ENCODE measurements at regions of chr2 and their contacts with region 1.

Region 1: DNA sequence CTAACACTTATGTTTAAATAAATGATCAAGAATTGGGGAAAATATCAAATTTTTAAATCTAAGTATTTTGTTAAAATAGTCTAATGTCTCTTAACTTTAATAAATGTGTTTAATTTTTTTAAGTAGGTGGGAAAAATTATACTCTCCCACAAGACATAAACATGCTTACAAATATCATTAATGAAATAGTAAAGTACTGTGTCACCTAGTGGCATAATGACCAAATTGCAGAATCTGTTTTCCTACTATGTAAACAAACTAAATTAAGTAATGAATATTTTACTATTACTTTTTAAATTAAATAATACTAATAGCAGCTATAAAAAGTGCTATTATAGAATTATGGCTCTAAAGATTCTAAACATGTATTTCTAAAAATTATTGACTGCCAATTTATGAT is 52.0 kb upstream of the CHAC2 start:
- DNase-seq: no peak
- ATAC-seq: no peak
- H3K4me3 ChIP-seq: no peak overlapping the region
- H3K27ac ChIP-seq: no peak overlapping the region
- H3K4me1 ChIP-seq: no peaks in the 10 kb centered on the region
- H3K27me3 ChIP-seq: no peaks in the 10 kb centered on the region
- CTCF ChIP-seq: peak; percentile 36
- POLR2A ChIP-seq: no peak
- RAD21 ChIP-seq: peak; percentile 39; the same call in 1 of the 2 replicates

Region 2: GRCh38 chr2:53559302-53559967 is 156.1 kb before region 1 on chr2:
- CTCF ChIA-PET with region 1: no interaction called
- POLR2A ChIA-PET with region 1: no interaction called
- dilution Hi-C with region 1: no loop called
- in situ Hi-C with region 1: no loop called
- intact Hi-C with region 1: no loop called
- DNase-seq: no peak
- ATAC-seq: no peak
- H3K4me3 ChIP-seq: no peak overlapping the region
- H3K27ac ChIP-seq: no peak overlapping the region
- H3K4me1 ChIP-seq: no peaks in the 10 kb centered on the region
- H3K27me3 ChIP-seq: no peaks in the 10 kb centered on the region
- CTCF ChIP-seq: no peak
- POLR2A ChIP-seq: no peak
- RAD21 ChIP-seq: no peak

Region 3: DNA sequence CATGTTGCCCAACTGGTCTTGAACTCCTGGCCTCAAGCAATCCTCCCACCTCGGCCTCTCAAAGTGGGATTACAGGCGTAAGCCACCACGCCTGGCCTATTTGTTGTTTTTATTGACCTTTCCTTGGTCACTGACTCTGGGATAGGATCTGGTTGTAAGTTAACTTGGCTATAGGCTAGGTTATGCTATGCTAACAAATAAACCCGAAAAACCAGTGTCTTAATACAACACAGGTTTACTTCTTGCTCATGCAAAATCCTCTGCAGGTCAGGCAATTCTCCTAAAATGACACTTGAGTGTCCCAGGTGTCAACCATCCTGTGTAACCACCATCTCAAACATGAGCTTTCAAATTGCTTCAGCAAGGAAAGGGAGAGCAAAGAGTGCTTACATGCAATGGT is 27.5 kb before region 1 on chr2:
- CTCF ChIA-PET with region 1: no interaction called
- POLR2A ChIA-PET with region 1: no interaction called
- dilution Hi-C with region 1: no loop called
- in situ Hi-C with region 1: no loop called
- intact Hi-C with region 1: loop called (anchors 5 kb)
- DNase-seq: no peak
- ATAC-seq: no peak
- H3K4me3 ChIP-seq: no peak overlapping the region
- H3K27ac ChIP-seq: no peak overlapping the region
- H3K4me1 ChIP-seq: no peaks in the 10 kb centered on the region
- H3K27me3 ChIP-seq: no peaks in the 10 kb centered on the region
- CTCF ChIP-seq: no peak
- POLR2A ChIP-seq: no peak
- RAD21 ChIP-seq: no peak

Region 4: GRCh38 chr2:54015798-54016699 is 300.5 kb after region 1 on chr2:
- CTCF ChIA-PET with region 1: no interaction called
- POLR2A ChIA-PET with region 1: no interaction called
- dilution Hi-C with region 1: no loop called
- in situ Hi-C with region 1: no loop called
- intact Hi-C with region 1: no loop called
- DNase-seq: peak; percentile 88
- ATAC-seq: peak; percentile 97
- H3K4me3 ChIP-seq: no peak overlapping the region
- H3K27ac ChIP-seq: no peak overlapping the region; the same call in 1 of the 2 replicates
- H3K4me1 ChIP-seq: peaks cover 4% of the 10 kb centered on the region; the same call in 1 of the 2 replicates
- H3K27me3 ChIP-seq: no peaks in the 10 kb centered on the region
- CTCF ChIP-seq: no peak
- POLR2A ChIP-seq: no peak
- RAD21 ChIP-seq: no peak

Measured in IMR-90 (cell line).